Left ventricle myocardium inferior (tissue), 1 donor: ENCODE measurements at regions of chr12 and their contacts with region 1.

Region 1: DNA sequence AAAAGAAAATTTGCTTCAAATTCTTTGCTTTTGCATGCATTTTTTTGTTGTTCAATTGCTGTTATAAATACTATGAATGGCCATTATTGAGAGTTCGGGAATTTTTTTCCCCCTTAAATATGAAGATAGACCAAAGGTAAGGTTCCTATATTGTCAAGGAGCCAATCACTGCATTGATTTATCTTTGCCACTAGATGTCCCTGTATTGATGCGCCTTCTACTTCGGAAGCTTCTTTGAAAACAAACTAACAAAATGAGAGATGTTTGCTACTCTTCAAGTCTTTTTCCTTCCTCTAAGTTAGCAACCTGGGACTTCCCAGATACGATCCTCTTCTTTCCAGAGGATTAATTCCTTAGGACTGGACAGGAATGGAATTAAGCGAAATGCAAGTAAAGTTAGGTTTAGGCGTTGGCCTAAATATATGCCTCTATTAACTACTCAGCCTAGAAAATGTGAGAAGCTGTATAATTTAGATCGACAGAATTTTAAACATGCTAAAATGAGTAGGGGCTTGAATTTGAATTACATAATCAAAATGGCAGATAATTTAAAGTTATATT is 318.1 kb downstream of the AEBP2 start:
- DNase-seq: no peak
- H3K4me3 ChIP-seq: no peak overlapping the region
- H3K27ac ChIP-seq: peak overlapping the region; percentile 51
- H3K4me1 ChIP-seq: peaks cover 11% of the 10 kb centered on the region
- H3K27me3 ChIP-seq: no peaks in the 10 kb centered on the region
- CTCF ChIP-seq: peak; percentile 80

Region 2: GRCh38 chr12:19546027-19546426 is 211.4 kb before region 1 on chr12:
- intact Hi-C with region 1: no loop called
- DNase-seq: no peak
- H3K4me3 ChIP-seq: peak overlapping the region; percentile 38
- H3K27ac ChIP-seq: peak overlapping the region; percentile 72
- H3K4me1 ChIP-seq: peaks cover 33% of the 10 kb centered on the region
- H3K27me3 ChIP-seq: no peaks in the 10 kb centered on the region
- CTCF ChIP-seq: no peak

Region 3: GRCh38 chr12:20220339-20220738 is 462.9 kb after region 1 on chr12:
- intact Hi-C with region 1: loop called (anchors 10 kb)
- DNase-seq: no peak
- H3K4me3 ChIP-seq: no peak overlapping the region
- H3K27ac ChIP-seq: no peak overlapping the region
- H3K4me1 ChIP-seq: no peaks in the 10 kb centered on the region
- H3K27me3 ChIP-seq: no peaks in the 10 kb centered on the region
- CTCF ChIP-seq: peak; percentile 43